ENCODE measurements at regions of chr13 and their contacts with region 1.

Region 1: GRCh38 chr13:75365724-75366173 is 116.2 kb downstream of the TBC1D4 start:
- DNase-seq: peak; percentile 81
- H3K4me3 Mint-ChIP-seq: peak overlapping the region; percentile 68
- H3K27ac Mint-ChIP-seq: peak overlapping the region; percentile 93
- H3K4me1 Mint-ChIP-seq: peaks cover 48% of the 10 kb centered on the region
- H3K27me3 Mint-ChIP-seq: no peaks in the 10 kb centered on the region

Region 2: DNA sequence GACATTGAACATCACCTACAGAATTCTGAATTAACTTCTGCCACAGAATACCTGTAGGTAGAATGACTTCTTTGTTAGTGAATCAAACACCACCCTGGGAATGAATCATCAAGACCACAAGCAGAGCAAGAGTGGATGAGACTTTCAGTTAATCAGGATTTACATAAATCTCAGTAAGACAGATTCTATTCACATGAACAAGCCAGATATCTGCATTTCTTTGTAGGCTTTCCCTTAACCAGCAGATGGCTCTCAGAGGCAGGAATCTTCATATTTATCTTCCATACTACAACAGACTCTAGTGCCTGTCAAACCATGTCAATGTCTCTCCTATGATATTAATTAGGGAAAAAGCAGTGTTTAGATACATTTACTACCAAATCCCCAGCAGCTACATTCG is 1643.6 kb before region 1 on chr13:
- intact Hi-C with region 1: loop called (anchors 5 kb)
- DNase-seq: no peak
- H3K4me3 Mint-ChIP-seq: no peak overlapping the region
- H3K27ac Mint-ChIP-seq: no peak overlapping the region
- H3K4me1 Mint-ChIP-seq: peaks cover 17% of the 10 kb centered on the region
- H3K27me3 Mint-ChIP-seq: no peaks in the 10 kb centered on the region

Region 3: GRCh38 chr13:75299913-75300862 is 65.6 kb before region 1 on chr13:
- intact Hi-C with region 1: no loop called
- DNase-seq: no peak
- H3K4me3 Mint-ChIP-seq: peak overlapping the region; percentile 43
- H3K27ac Mint-ChIP-seq: peak overlapping the region; percentile 72
- H3K4me1 Mint-ChIP-seq: peaks cover 20% of the 10 kb centered on the region
- H3K27me3 Mint-ChIP-seq: no peaks in the 10 kb centered on the region

Region 4: DNA sequence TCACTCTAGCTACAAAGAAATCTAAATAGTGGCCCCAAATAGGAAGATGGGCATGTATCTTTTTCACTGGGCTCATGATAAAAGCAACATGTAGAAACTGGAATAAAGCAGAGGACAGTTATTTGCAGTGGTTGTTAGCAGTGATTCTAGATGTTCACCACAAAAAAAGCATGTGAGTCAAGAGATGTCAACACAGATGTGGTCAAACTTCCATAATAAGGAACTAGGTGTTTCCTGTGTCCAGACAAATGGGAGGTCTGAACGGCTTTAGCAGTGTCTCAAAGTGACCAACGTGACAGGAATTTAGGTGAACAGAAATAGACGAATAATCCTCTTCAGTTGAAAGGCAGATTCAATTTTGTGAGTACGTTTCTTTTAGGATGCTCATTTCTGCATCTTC is 46.5 kb before region 1 on chr13:
- intact Hi-C with region 1: loop called (anchors 1 kb)
- DNase-seq: no peak
- H3K4me3 Mint-ChIP-seq: peak overlapping the region; percentile 4
- H3K27ac Mint-ChIP-seq: peak overlapping the region; percentile 93
- H3K4me1 Mint-ChIP-seq: peaks cover 51% of the 10 kb centered on the region
- H3K27me3 Mint-ChIP-seq: no peaks in the 10 kb centered on the region

Region 5: DNA sequence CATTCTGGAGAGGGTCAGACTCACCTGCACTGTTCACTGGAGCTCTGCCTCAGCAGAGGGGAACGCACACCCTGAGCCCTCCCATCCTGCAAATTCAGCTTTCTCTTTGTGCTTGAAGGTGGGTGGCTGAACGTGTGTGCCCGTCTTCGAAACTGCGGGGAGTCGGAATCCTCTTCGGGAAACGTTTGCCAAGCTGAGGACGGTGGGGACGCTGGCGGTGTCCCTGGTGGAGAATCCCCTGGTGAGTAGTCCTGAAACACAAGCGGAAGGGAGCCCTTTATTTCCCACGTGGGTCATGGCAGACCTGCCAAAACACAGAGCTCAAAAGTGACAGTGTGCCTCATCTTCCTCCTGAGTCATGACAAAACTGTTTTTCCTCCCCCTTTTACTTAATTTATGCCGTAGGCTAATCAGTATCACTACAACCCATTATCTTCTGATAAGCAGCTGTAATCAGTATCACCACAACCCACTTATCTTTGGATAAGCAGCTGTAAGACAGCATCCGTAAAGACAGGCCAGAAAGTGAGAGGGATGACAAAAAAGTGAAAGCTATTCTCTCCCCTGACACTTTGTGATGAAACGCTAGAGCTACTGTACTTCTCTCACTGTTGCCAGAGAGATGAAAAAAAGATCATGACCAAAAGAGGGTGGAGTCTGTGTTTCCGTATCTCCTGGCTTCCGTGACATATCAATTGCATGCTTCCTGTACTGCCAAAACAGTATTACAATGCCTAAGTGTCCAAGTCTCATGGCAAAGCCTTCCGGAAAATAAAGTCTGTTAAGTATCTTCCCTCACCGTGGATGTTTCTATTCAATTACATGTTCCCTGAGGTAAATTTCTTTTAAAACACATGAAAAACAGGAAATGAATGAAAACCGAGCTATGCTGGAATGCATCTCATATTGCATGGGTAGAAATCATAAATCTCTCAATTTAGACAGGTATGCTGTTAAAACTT is 39.3 kb before region 1 on chr13:
- intact Hi-C with region 1: loop called (anchors 1 kb)
- DNase-seq: peak; percentile 87
- H3K4me3 Mint-ChIP-seq: peak overlapping the region; percentile 93
- H3K27ac Mint-ChIP-seq: peak overlapping the region; percentile 98
- H3K4me1 Mint-ChIP-seq: peaks cover 29% of the 10 kb centered on the region
- H3K27me3 Mint-ChIP-seq: no peaks in the 10 kb centered on the region

Region 6: GRCh38 chr13:75482070-75482819 is 116.5 kb after region 1 on chr13 and contains the start of gene TBC1D4:
- intact Hi-C with region 1: loop called (anchors 1 kb)
- DNase-seq: peak; percentile 87
- H3K4me3 Mint-ChIP-seq: peak within 1 kb of the TSS; percentile 99
- H3K27ac Mint-ChIP-seq: peak within 1 kb of the TSS; percentile 86
- H3K4me1 Mint-ChIP-seq: peaks cover 36% of the 10 kb centered on the region
- H3K27me3 Mint-ChIP-seq: peaks cover 47% of the 10 kb centered on the region
- total RNA-seq, gene TBC1D4: 72.3 and 77.0 TPM in 2 replicates

Region 7: GRCh38 chr13:75636436-75637180 is 270.9 kb after region 1 on chr13:
- intact Hi-C with region 1: no loop called
- DNase-seq: peak; percentile 84
- H3K4me3 Mint-ChIP-seq: peak overlapping the region; percentile 79
- H3K27ac Mint-ChIP-seq: no peak overlapping the region
- H3K4me1 Mint-ChIP-seq: peaks cover 16% of the 10 kb centered on the region
- H3K27me3 Mint-ChIP-seq: peaks cover 21% of the 10 kb centered on the region

Region 8: GRCh38 chr13:76886292-76887075 is 1520.7 kb after region 1 on chr13 and contains the start of gene KCTD12:
- intact Hi-C with region 1: loop called (anchors 5 kb)
- DNase-seq: peak; percentile 93
- H3K4me3 Mint-ChIP-seq: peak within 1 kb of the TSS; percentile 89
- H3K27ac Mint-ChIP-seq: peak within 1 kb of the TSS; percentile 87
- H3K4me1 Mint-ChIP-seq: peaks cover 26% of the 10 kb centered on the region
- H3K27me3 Mint-ChIP-seq: peaks cover 40% of the 10 kb centered on the region
- total RNA-seq, gene KCTD12: 11.8 and 12.9 TPM in 2 replicates

Measured in activated CD4-positive, alpha-beta T cell treated with anti-CD3 and anti-CD28 coated beads, Interleukin-2, amount 10 ng/mL, durations not matched to agents 24 days and 14 days (primary cell).